ENCODE measurements at regions of chr1 and their contacts with region 1.

Region 1: DNA sequence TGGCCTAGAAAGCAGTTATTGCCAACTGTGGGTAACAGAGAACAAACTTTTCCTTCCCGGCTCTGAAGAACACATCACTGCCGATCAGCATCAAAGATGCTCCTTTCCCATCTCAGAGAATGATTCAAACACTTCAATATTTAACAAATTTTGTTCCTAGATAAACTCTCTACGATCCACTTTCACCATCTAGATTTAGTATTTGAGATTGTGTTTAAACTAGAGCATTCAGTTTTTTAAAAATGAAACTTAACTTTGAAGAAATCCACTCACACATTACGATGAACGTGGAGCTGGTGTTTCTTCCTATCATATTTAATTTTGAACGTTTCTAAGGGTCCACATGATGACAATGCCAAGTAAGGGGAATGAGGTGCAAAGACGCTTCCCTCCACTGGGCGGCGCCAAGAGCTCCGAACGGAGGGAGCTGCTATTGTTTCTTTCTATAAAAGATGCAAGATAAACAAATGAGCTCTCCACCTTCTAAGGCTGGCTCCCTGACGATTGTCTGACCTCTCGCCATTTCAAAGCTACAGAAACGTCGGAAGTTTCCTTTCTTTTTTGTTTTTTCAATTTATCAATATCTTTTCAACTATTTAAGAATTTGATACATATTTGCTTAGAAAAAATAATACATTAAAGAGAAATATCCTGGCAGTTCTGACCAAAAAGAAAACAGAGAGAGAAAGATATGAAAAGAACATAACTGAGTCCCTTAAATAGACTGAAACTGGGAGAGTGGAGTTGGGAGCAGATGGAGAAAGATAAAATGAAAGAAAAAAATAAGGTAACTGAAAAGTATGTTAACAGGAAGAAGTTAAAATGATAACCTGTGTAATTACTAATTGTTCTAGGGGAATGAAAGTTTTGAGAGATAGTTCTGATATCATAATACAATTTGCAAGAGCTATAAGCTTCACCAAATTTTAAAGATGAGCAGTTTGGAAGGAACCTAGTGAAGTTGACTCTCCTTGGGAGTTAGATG is 4.4 kb upstream of the BARHL2 start:
- H3K4me3 ChIP-seq: no peak overlapping the region; the same call in 1 of the 2 replicates
- H3K27ac ChIP-seq: no peak overlapping the region
- H3K4me1 ChIP-seq: peaks cover 1% of the 10 kb centered on the region; the same call in 1 of the 2 replicates
- CTCF ChIP-seq: 0 out of 2 replicates have a peak, but pooled peaks have one; percentile 46

Region 2: GRCh38 chr1:90964444-90965035 is 243.0 kb after region 1 on chr1:
- CTCF ChIA-PET with region 1: interaction called, 19 read pairs
- POLR2A ChIA-PET with region 1: no interaction called
- H3K4me3 ChIP-seq: no peak overlapping the region
- H3K27ac ChIP-seq: no peak overlapping the region
- H3K4me1 ChIP-seq: no peaks in the 10 kb centered on the region
- CTCF ChIP-seq: no peak